ENCODE measurements at regions of chr20 and their contacts with region 1.

Region 1: GRCh38 chr20:49936153-49937027 is at the start of gene RNF114:
- DNase-seq: peak; percentile 97
- ATAC-seq: peak; percentile 81
- H3K4me3 ChIP-seq: peak within 1 kb of the TSS; percentile 91
- H3K27ac ChIP-seq: peak within 1 kb of the TSS; percentile 4
- H3K4me1 ChIP-seq: peaks cover 17% of the 10 kb centered on the region
- H3K27me3 ChIP-seq: no peaks in the 10 kb centered on the region
- CTCF ChIP-seq: no peak
- total RNA-seq, gene RNF114: 106 and 133 TPM in 2 replicates

Region 2: DNA sequence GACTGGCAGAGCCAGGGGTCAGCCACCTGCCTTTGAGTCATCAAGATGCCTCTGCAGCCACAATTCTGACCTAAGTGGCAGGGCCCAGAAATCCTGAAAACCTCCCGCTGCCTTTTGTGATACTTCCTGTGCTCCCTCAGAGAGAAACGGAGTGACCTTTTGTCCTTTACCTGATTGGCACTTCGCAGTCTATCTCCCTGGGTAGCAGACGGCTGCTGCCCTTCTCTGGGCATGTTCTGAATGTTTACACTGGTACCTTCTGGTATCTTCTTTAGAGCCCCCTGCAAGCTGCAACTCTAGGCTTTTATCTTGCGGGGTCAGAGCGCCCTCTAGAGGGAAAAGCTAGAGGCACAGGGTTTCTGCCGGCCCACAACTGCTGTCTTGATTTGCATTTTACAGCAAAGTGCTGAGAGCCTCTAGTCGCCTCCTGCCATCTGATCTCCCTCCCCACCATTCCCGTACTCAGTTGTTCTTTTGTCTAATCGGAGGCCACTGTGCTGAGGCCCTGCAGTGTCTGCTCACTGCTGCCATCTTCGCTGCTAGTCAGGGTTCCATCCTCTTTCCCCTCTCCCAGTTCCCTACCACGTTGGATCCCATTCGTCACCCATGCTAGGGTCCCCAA is 47.9 kb before region 1 on chr20:
- CTCF ChIA-PET with region 1: interaction called, 10 read pairs
- POLR2A ChIA-PET with region 1: no interaction called
- intact Hi-C with region 1: no loop called
- DNase-seq: peak; percentile 78
- ATAC-seq: peak; percentile 77
- H3K4me3 ChIP-seq: no peak overlapping the region
- H3K27ac ChIP-seq: no peak overlapping the region
- H3K4me1 ChIP-seq: 0 out of 2 replicates have a peak, but pooled peaks cover 5% of the 10 kb centered on the region
- H3K27me3 ChIP-seq: no peaks in the 10 kb centered on the region
- CTCF ChIP-seq: peak; percentile 98

Region 3: DNA sequence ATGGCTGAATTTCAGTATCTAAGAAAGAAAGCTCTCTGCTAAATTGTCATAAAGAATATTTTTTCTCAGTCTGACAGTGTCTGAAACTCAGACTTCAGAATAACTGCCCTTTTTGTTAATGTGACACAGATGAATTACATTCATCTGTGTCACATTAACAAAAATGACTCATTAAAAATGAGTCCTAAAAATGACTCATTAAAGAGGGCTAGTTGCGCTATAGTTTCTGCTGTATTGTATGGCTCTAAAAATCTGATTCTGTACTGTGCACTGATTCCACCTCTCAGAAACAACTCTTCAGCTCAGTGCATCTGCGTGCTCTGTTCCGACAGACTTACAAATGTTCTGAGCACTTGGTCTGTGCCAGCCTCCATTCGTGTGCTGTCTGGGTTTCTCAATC is 14.8 kb after region 1 on chr20:
- CTCF ChIA-PET with region 1: no interaction called
- POLR2A ChIA-PET with region 1: no interaction called
- intact Hi-C with region 1: loop called (anchors 2 kb)
- DNase-seq: peak; percentile 90
- ATAC-seq: peak; percentile 93
- H3K4me3 ChIP-seq: no peak overlapping the region
- H3K27ac ChIP-seq: peak overlapping the region; percentile 51
- H3K4me1 ChIP-seq: peaks cover 33% of the 10 kb centered on the region
- H3K27me3 ChIP-seq: no peaks in the 10 kb centered on the region
- CTCF ChIP-seq: no peak

Measured in PC-3 (cell line).